Activated CD8-positive, alpha-beta T cell treated with anti-CD3 and anti-CD28 coated beads for 36 hours (primary cell): ENCODE measurements at regions of chr16 and their contacts with region 1.

Region 1: GRCh38 chr16:2142942-2143877 is 5.2 kb upstream of the RAB26 start:
- DNase-seq: peak; percentile 36
- ATAC-seq: peak; percentile 36
- H3K4me3 Mint-ChIP-seq: no peak overlapping the region
- H3K27ac Mint-ChIP-seq: no peak overlapping the region
- H3K4me1 Mint-ChIP-seq: peaks cover 2% of the 10 kb centered on the region
- H3K27me3 Mint-ChIP-seq: no peaks in the 10 kb centered on the region
- CTCF ChIP-seq: no peak

Region 2: GRCh38 chr16:2047330-2048115 is 95.7 kb before region 1 on chr16 and contains the starts of genes NTHL1 and TSC2:
- CTCF ChIA-PET with region 1: interaction called, 16 read pairs
- POLR2A ChIA-PET with region 1: interaction called, 3 read pairs
- intact Hi-C with region 1: no loop called
- DNase-seq: peak; percentile 97
- ATAC-seq: peak; percentile 97
- H3K4me3 Mint-ChIP-seq: peak within 1 kb of the TSS; percentile 93
- H3K27ac Mint-ChIP-seq: peak within 1 kb of the TSS; percentile 70
- H3K4me1 Mint-ChIP-seq: peaks cover 22% of the 10 kb centered on the region
- H3K27me3 Mint-ChIP-seq: no peaks in the 10 kb centered on the region
- CTCF ChIP-seq: peak; percentile 33
- total RNA-seq, gene NTHL1: 28.2 to 29.8 TPM
- total RNA-seq, gene TSC2: 54.4 to 57.3 TPM

Region 3: GRCh38 chr16:2102471-2102870 is 40.7 kb before region 1 on chr16:
- CTCF ChIA-PET with region 1: no interaction called
- POLR2A ChIA-PET with region 1: no interaction called
- intact Hi-C with region 1: no loop called
- DNase-seq: no peak
- ATAC-seq: no peak
- H3K4me3 Mint-ChIP-seq: no peak overlapping the region
- H3K27ac Mint-ChIP-seq: no peak overlapping the region
- H3K4me1 Mint-ChIP-seq: no peaks in the 10 kb centered on the region
- H3K27me3 Mint-ChIP-seq: no peaks in the 10 kb centered on the region
- CTCF ChIP-seq: no peak